ENCODE measurements at regions of chr20 and their contacts with region 1.

Region 1: GRCh38 chr20:17682103-17682888 is at the start of gene RRBP1:
- DNase-seq: peak; percentile 94 to 98 (median 96)
- ATAC-seq: peak; percentile 91
- H3K4me3 ChIP-seq: peak within 1 kb of the TSS; percentile 50 to 71
- H3K4me3 Mint-ChIP-seq: peak within 1 kb of the TSS; percentile 88
- H3K27ac ChIP-seq: peak within 1 kb of the TSS; percentile 40 to 69
- H3K27ac Mint-ChIP-seq: peak within 1 kb of the TSS; percentile 86
- H3K4me1 ChIP-seq: peaks cover 18% of the 10 kb centered on the region
- H3K4me1 Mint-ChIP-seq: peaks cover 19% of the 10 kb centered on the region
- H3K27me3 ChIP-seq: no peaks in the 10 kb centered on the region
- H3K27me3 Mint-ChIP-seq: peaks cover 25% of the 10 kb centered on the region
- CTCF ChIP-seq: peak; percentile 83
- total RNA-seq, gene RRBP1: 26.4 to 26.5 TPM

Region 2: GRCh38 chr20:17536944-17537444 is 145.3 kb before region 1 on chr20:
- CTCF ChIA-PET with region 1: interaction called, 9 read pairs
- POLR2A ChIA-PET with region 1: no interaction called
- intact Hi-C with region 1: loop called in 1 of 2 experiments (anchors 10 kb)
- DNase-seq: peak; percentile 37 to 83 (median 67)
- ATAC-seq: peak; percentile 98
- H3K4me3 ChIP-seq: no peak overlapping the region
- H3K4me3 Mint-ChIP-seq: no peak overlapping the region
- H3K27ac ChIP-seq: no peak overlapping the region
- H3K27ac Mint-ChIP-seq: no peak overlapping the region
- H3K4me1 ChIP-seq: no peaks in the 10 kb centered on the region
- H3K4me1 Mint-ChIP-seq: peaks cover 3% of the 10 kb centered on the region
- H3K27me3 ChIP-seq: no peaks in the 10 kb centered on the region
- H3K27me3 Mint-ChIP-seq: peaks cover 14% of the 10 kb centered on the region
- CTCF ChIP-seq: peak; percentile 83

Region 3: GRCh38 chr20:17898548-17898994 is 216.3 kb after region 1 on chr20:
- CTCF ChIA-PET with region 1: interaction called, 12 read pairs
- POLR2A ChIA-PET with region 1: interaction called, 4 read pairs
- intact Hi-C with region 1: loop called in 1 of 2 experiments (anchors 1 kb)
- DNase-seq: peak; percentile 34 to 79 (median 63)
- ATAC-seq: peak; percentile 85
- H3K4me3 ChIP-seq: no peak overlapping the region
- H3K4me3 Mint-ChIP-seq: no peak overlapping the region
- H3K27ac ChIP-seq: no peak overlapping the region
- H3K27ac Mint-ChIP-seq: no peak overlapping the region
- H3K4me1 ChIP-seq: peaks cover 4% of the 10 kb centered on the region
- H3K4me1 Mint-ChIP-seq: peaks cover 5% of the 10 kb centered on the region
- H3K27me3 ChIP-seq: peaks cover 0 to 4% of the 10 kb centered on the region in 2 experiments
- H3K27me3 Mint-ChIP-seq: peaks cover 20% of the 10 kb centered on the region
- CTCF ChIP-seq: peak; percentile 93

Region 4: GRCh38 chr20:17995967-17996819 is 313.9 kb after region 1 on chr20:
- CTCF ChIA-PET with region 1: interaction called, 10 read pairs
- POLR2A ChIA-PET with region 1: no interaction called
- intact Hi-C with region 1: loop called (anchors 1 kb)
- DNase-seq: peak in 6 of 9 experiments; percentile 11 to 78 (median 38)
- ATAC-seq: peak; percentile 97
- H3K4me3 ChIP-seq: no peak overlapping the region
- H3K4me3 Mint-ChIP-seq: no peak overlapping the region
- H3K27ac ChIP-seq: no peak overlapping the region
- H3K27ac Mint-ChIP-seq: no peak overlapping the region
- H3K4me1 ChIP-seq: no peaks in the 10 kb centered on the region
- H3K4me1 Mint-ChIP-seq: peaks cover 9% of the 10 kb centered on the region
- H3K27me3 ChIP-seq: no peaks in the 10 kb centered on the region
- H3K27me3 Mint-ChIP-seq: peaks cover 19% of the 10 kb centered on the region
- CTCF ChIP-seq: peak; percentile 97

Region 5: GRCh38 chr20:18507218-18508021 is 825.1 kb after region 1 on chr20 and contains the start of gene SEC23B:
- CTCF ChIA-PET with region 1: no interaction called
- POLR2A ChIA-PET with region 1: interaction called, 4 read pairs
- intact Hi-C with region 1: loop called (anchors 5 kb)
- DNase-seq: peak; percentile 96 to 100 (median 98)
- ATAC-seq: peak; percentile 82
- H3K4me3 ChIP-seq: peak within 1 kb of the TSS; percentile 63 to 87
- H3K4me3 Mint-ChIP-seq: peak within 1 kb of the TSS; percentile 100
- H3K27ac ChIP-seq: peak within 1 kb of the TSS; percentile 97 to 100
- H3K27ac Mint-ChIP-seq: peak within 1 kb of the TSS; percentile 100
- H3K4me1 ChIP-seq: peaks cover 17% of the 10 kb centered on the region
- H3K4me1 Mint-ChIP-seq: peaks cover 47% of the 10 kb centered on the region
- H3K27me3 ChIP-seq: no peaks in the 10 kb centered on the region
- H3K27me3 Mint-ChIP-seq: no peaks in the 10 kb centered on the region
- CTCF ChIP-seq: no peak
- total RNA-seq, gene SEC23B: 31.5 to 31.8 TPM

Region 6: GRCh38 chr20:19598117-19598850 is 1916.0 kb after region 1 on chr20:
- CTCF ChIA-PET with region 1: no interaction called
- POLR2A ChIA-PET with region 1: no interaction called
- intact Hi-C with region 1: no loop called
- DNase-seq: no peak
- ATAC-seq: no peak
- H3K4me3 ChIP-seq: no peak overlapping the region
- H3K4me3 Mint-ChIP-seq: no peak overlapping the region
- H3K27ac ChIP-seq: no peak overlapping the region
- H3K27ac Mint-ChIP-seq: no peak overlapping the region
- H3K4me1 ChIP-seq: no peaks in the 10 kb centered on the region
- H3K4me1 Mint-ChIP-seq: no peaks in the 10 kb centered on the region
- H3K27me3 ChIP-seq: no peaks in the 10 kb centered on the region
- H3K27me3 Mint-ChIP-seq: no peaks in the 10 kb centered on the region
- CTCF ChIP-seq: no peak